ENCODE measurements at regions of chr11 and their contacts with region 1.

Region 1: DNA sequence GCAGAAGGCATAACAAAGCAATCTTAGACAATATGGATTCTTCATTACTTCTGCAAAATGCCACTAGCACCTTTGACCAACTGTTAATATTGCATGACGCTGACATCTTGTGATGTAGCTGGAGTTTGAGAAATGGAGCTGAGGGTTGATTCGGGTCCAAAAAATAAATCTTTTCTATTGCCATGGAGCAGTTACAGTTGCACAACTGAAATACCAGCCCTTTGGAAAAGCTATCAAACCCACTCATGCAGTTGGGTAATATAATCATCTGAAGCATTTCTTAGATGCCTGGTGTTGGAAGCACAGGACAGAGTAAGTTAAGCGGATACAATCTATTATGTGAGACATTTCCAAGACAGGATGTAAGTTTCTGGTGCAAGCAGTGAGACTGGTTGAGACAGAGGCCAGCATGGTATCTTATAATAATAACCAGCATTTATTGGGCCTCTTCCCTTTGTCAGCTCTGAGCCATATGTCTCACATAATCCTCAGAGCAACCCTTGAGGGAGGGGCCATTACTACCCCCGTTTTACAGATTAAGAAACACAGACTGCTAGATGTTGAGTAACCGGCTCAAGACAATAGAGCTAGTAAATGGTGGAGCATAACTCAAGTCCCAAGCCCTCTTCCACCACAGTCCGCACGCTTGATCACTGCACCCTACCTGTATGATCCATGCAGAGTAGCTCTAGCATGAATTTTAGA is 74.9 kb upstream of the CAPRIN1 start:
- DNase-seq: no peak
- ATAC-seq: no peak
- H3K4me3 ChIP-seq: no peak overlapping the region
- H3K27ac ChIP-seq: no peak overlapping the region
- H3K4me1 ChIP-seq: no peaks in the 10 kb centered on the region
- CTCF ChIP-seq: no peak
- EP300 ChIP-seq: no peak
- POLR2A ChIP-seq: no peak
- RAD21 ChIP-seq: no peak

Region 2: GRCh38 chr11:33835143-33835878 is 141.3 kb before region 1 on chr11:
- CTCF ChIA-PET with region 1: interaction called, 36 read pairs
- POLR2A ChIA-PET with region 1: no interaction called
- DNase-seq: peak; percentile 35 to 69
- ATAC-seq: peak; percentile 70 to 83; a peak in 5 of 6 replicates
- H3K4me3 ChIP-seq: no peak overlapping the region
- H3K27ac ChIP-seq: no peak overlapping the region
- H3K4me1 ChIP-seq: 0 out of 3 replicates have a peak, but pooled peaks cover 4% of the 10 kb centered on the region
- CTCF ChIP-seq: peak; percentile 59; the same call in 2 of the 3 replicates
- EP300 ChIP-seq: no peak
- POLR2A ChIP-seq: no peak
- RAD21 ChIP-seq: peak; percentile 63 to 73

Region 3: GRCh38 chr11:34134765-34135164 is 158.1 kb after region 1 on chr11:
- CTCF ChIA-PET with region 1: no interaction called
- POLR2A ChIA-PET with region 1: no interaction called
- DNase-seq: no peak
- ATAC-seq: no peak
- H3K4me3 ChIP-seq: no peak overlapping the region
- H3K27ac ChIP-seq: no peak overlapping the region
- H3K4me1 ChIP-seq: no peaks in the 10 kb centered on the region
- CTCF ChIP-seq: no peak
- EP300 ChIP-seq: no peak
- POLR2A ChIP-seq: no peak
- RAD21 ChIP-seq: no peak